MCF 10A (cell line): ENCODE measurements at regions of chr4 and their contacts with region 1.

Region 1: GRCh38 chr4:26150948-26151347 is 169.9 kb upstream of the RBPJ start:
- DNase-seq: peak; percentile 30
- H3K4me3 Mint-ChIP-seq: no peak overlapping the region
- H3K27ac Mint-ChIP-seq: no peak overlapping the region
- H3K4me1 Mint-ChIP-seq: no peaks in the 10 kb centered on the region
- H3K27me3 Mint-ChIP-seq: no peaks in the 10 kb centered on the region
- CTCF ChIP-seq: no peak

Region 2: GRCh38 chr4:26197018-26197779 is 46.3 kb after region 1 on chr4:
- CTCF ChIA-PET with region 1: no interaction called
- POLR2A ChIA-PET with region 1: no interaction called
- intact Hi-C with region 1: loop called (anchors 5 kb)
- DNase-seq: peak; percentile 99
- H3K4me3 Mint-ChIP-seq: no peak overlapping the region
- H3K27ac Mint-ChIP-seq: peak overlapping the region; percentile 71
- H3K4me1 Mint-ChIP-seq: peaks cover 8% of the 10 kb centered on the region
- H3K27me3 Mint-ChIP-seq: peaks cover 18% of the 10 kb centered on the region
- CTCF ChIP-seq: no peak

Region 3: GRCh38 chr4:26263165-26263564 is 112.2 kb after region 1 on chr4:
- CTCF ChIA-PET with region 1: no interaction called
- POLR2A ChIA-PET with region 1: no interaction called
- intact Hi-C with region 1: no loop called
- DNase-seq: peak; percentile 33
- H3K4me3 Mint-ChIP-seq: no peak overlapping the region
- H3K27ac Mint-ChIP-seq: no peak overlapping the region
- H3K4me1 Mint-ChIP-seq: no peaks in the 10 kb centered on the region
- H3K27me3 Mint-ChIP-seq: no peaks in the 10 kb centered on the region
- CTCF ChIP-seq: no peak

Region 4: GRCh38 chr4:26325191-26325590 is 174.2 kb after region 1 on chr4:
- CTCF ChIA-PET with region 1: interaction called, 3 read pairs
- POLR2A ChIA-PET with region 1: no interaction called
- intact Hi-C with region 1: loop called (anchors 1 kb)
- DNase-seq: peak; percentile 64
- H3K4me3 Mint-ChIP-seq: no peak overlapping the region
- H3K27ac Mint-ChIP-seq: no peak overlapping the region
- H3K4me1 Mint-ChIP-seq: peaks cover 29% of the 10 kb centered on the region
- H3K27me3 Mint-ChIP-seq: no peaks in the 10 kb centered on the region
- CTCF ChIP-seq: peak; percentile 31